CD8-positive, alpha-beta T cell (primary cell): ENCODE measurements at regions of chr7 and their contacts with region 1.

Region 1: GRCh38 chr7:104923010-104923421 is 91.0 kb upstream of the KMT2E start:
- DNase-seq: peak; percentile 54 to 88 (median 72)
- ATAC-seq: peak; percentile 96
- H3K4me3 ChIP-seq: no peak overlapping the region
- H3K4me3 Mint-ChIP-seq: no peak overlapping the region
- H3K27ac ChIP-seq: no peak overlapping the region
- H3K27ac Mint-ChIP-seq: peak overlapping the region; percentile 55
- H3K4me1 ChIP-seq: no peaks in the 10 kb centered on the region
- H3K4me1 Mint-ChIP-seq: peaks cover 5% of the 10 kb centered on the region
- H3K27me3 ChIP-seq: no peaks in the 10 kb centered on the region
- H3K27me3 Mint-ChIP-seq: no peaks in the 10 kb centered on the region
- CTCF ChIP-seq: peak; percentile 66

Region 2: DNA sequence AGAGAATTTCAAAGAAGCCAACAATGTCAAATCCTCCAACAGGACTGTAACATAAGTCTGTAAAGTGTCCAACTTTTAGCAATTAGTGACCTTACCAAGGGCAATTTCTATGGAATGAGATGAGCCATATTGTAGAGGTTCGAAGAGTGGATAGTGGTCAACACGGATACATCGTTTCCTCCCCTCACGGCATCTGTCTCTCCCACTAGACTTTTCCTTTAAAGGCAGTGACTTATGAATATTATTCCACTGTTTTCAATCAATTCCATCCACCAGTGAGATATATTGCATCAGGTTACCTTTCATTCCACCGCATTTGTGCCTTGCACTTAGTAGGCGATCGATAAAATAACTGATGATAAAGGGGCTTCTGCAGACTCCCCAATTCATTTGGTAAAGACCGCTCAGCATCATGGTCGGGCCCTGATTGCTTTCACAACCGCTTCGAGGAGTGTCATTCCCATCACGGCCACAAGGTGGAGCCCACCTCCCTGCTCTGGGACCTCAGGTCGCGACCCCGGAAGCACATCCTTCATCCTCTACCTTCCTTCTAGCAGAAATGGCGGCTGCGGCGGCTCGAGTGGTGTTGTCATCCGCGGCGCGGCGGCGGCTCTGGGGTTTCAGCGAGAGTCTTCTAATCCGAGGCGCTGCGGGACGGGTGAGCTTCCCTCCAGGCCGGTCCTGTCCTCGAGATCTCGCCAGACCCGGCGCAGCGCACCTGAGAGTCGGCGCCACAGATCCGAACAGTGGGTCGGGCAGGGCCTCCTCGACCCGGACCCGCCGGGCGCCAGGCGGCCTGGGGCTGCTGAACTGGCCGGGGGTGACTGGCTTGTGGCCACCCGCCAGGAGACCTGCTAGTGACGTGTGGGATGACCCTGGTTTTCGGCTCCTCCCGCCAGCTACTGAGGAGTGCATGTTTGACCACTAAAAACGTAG is 1625.8 kb before region 1 on chr7 and contains the start of gene PMPCB:
- CTCF ChIA-PET with region 1: no interaction called
- POLR2A ChIA-PET with region 1: no interaction called
- intact Hi-C with region 1: loop called (anchors 2 to 5 kb)
- DNase-seq: peak; percentile 92 to 98 (median 97)
- ATAC-seq: peak; percentile 100
- H3K4me3 ChIP-seq: peak within 1 kb of the TSS; percentile 72 to 75
- H3K4me3 Mint-ChIP-seq: peak within 1 kb of the TSS; percentile 83
- H3K27ac ChIP-seq: peak within 1 kb of the TSS; percentile 76 to 92
- H3K27ac Mint-ChIP-seq: peak within 1 kb of the TSS; percentile 85
- H3K4me1 ChIP-seq: peaks cover 19% of the 10 kb centered on the region
- H3K4me1 Mint-ChIP-seq: peaks cover 43% of the 10 kb centered on the region
- H3K27me3 ChIP-seq: no peaks in the 10 kb centered on the region
- H3K27me3 Mint-ChIP-seq: no peaks in the 10 kb centered on the region
- CTCF ChIP-seq: peak; percentile 82
- total RNA-seq, gene PMPCB: 104 to 108 TPM

Region 3: DNA sequence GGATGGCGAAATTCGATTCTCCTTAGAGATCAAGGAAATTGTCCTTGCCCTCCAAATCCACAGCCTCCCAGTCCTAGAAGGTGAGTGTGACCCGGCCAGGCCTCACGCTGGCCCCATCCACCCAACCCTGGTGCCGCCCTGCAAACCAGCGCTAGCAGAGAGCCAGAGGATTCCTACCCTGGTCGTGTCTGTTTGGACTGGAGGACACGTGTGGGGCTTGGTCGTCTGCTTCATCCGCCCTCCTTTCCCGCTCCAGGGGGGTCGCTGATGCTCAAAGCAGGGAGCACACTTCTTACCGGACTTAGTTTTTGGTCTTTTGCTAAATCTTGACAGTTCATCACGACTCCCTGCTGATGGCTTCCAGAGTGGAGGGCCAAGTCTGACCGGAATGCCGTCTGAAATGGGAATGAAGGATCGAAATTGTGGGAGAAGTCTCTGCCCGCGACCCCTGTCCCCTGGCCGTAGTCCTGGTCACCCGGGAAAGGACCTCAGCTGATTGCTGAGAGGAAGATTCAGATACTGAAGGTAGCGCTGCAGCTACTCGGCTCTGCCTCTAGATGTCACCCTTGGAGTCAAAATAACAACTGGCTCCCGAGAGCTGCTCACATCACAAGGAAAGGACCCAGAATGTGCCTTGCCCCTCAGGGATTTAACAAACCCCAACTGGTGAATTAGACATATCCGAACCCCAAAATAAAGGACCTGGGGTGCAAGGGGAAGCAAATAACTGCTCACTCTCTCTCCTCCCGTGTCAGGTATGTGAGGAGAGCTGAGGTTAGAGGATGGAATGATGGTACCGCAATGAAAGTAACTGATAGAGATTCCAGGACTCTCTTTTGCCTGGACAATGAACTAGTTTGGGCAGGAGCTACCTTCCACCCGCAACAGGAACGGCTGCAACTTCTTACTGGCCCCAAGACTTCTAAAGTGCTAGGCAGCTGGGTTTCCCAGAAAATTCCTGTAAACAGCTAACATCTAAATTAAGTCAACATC is 691.7 kb before region 1 on chr7:
- CTCF ChIA-PET with region 1: interaction called, 4 read pairs
- POLR2A ChIA-PET with region 1: no interaction called
- intact Hi-C with region 1: loop called in 1 of 2 experiments (anchors 1 kb)
- DNase-seq: peak in 8 of 9 experiments; percentile 9 to 60 (median 39)
- ATAC-seq: peak; percentile 80
- H3K4me3 ChIP-seq: no peak overlapping the region
- H3K4me3 Mint-ChIP-seq: no peak overlapping the region
- H3K27ac ChIP-seq: no peak overlapping the region
- H3K27ac Mint-ChIP-seq: no peak overlapping the region
- H3K4me1 ChIP-seq: no peaks in the 10 kb centered on the region
- H3K4me1 Mint-ChIP-seq: no peaks in the 10 kb centered on the region
- H3K27me3 ChIP-seq: peaks cover 0 to 2% of the 10 kb centered on the region in 2 experiments
- H3K27me3 Mint-ChIP-seq: peaks cover 32% of the 10 kb centered on the region
- CTCF ChIP-seq: peak; percentile 78

Region 4: GRCh38 chr7:104862719-104863118 is 60.3 kb before region 1 on chr7:
- CTCF ChIA-PET with region 1: no interaction called
- POLR2A ChIA-PET with region 1: no interaction called
- intact Hi-C with region 1: no loop called
- DNase-seq: no peak
- ATAC-seq: no peak
- H3K4me3 ChIP-seq: no peak overlapping the region
- H3K4me3 Mint-ChIP-seq: no peak overlapping the region
- H3K27ac ChIP-seq: no peak overlapping the region
- H3K27ac Mint-ChIP-seq: no peak overlapping the region
- H3K4me1 ChIP-seq: peaks cover 9% of the 10 kb centered on the region
- H3K4me1 Mint-ChIP-seq: peaks cover 10% of the 10 kb centered on the region
- H3K27me3 ChIP-seq: no peaks in the 10 kb centered on the region
- H3K27me3 Mint-ChIP-seq: peaks cover 17% of the 10 kb centered on the region
- CTCF ChIP-seq: no peak

Region 5: GRCh38 chr7:104883718-104884452 is 39.1 kb before region 1 on chr7:
- CTCF ChIA-PET with region 1: interaction called, 166 read pairs
- POLR2A ChIA-PET with region 1: interaction called, 3 read pairs
- intact Hi-C with region 1: loop called (anchors 1 kb)
- DNase-seq: peak; percentile 46 to 84 (median 77)
- ATAC-seq: peak; percentile 84
- H3K4me3 ChIP-seq: no peak overlapping the region
- H3K4me3 Mint-ChIP-seq: no peak overlapping the region
- H3K27ac ChIP-seq: no peak overlapping the region
- H3K27ac Mint-ChIP-seq: no peak overlapping the region
- H3K4me1 ChIP-seq: no peaks in the 10 kb centered on the region
- H3K4me1 Mint-ChIP-seq: peaks cover 5% of the 10 kb centered on the region
- H3K27me3 ChIP-seq: no peaks in the 10 kb centered on the region
- H3K27me3 Mint-ChIP-seq: no peaks in the 10 kb centered on the region
- CTCF ChIP-seq: peak; percentile 88

Region 6: GRCh38 chr7:105046414-105046813 is 123.4 kb after region 1 on chr7:
- CTCF ChIA-PET with region 1: no interaction called
- POLR2A ChIA-PET with region 1: no interaction called
- intact Hi-C with region 1: loop called (anchors 1 to 2 kb)
- DNase-seq: no peak
- ATAC-seq: no peak
- H3K4me3 ChIP-seq: no peak overlapping the region
- H3K4me3 Mint-ChIP-seq: no peak overlapping the region
- H3K27ac ChIP-seq: no peak overlapping the region
- H3K27ac Mint-ChIP-seq: no peak overlapping the region
- H3K4me1 ChIP-seq: peaks cover 5% of the 10 kb centered on the region
- H3K4me1 Mint-ChIP-seq: peaks cover 67% of the 10 kb centered on the region
- H3K27me3 ChIP-seq: no peaks in the 10 kb centered on the region
- H3K27me3 Mint-ChIP-seq: no peaks in the 10 kb centered on the region
- CTCF ChIP-seq: no peak

Region 7: DNA sequence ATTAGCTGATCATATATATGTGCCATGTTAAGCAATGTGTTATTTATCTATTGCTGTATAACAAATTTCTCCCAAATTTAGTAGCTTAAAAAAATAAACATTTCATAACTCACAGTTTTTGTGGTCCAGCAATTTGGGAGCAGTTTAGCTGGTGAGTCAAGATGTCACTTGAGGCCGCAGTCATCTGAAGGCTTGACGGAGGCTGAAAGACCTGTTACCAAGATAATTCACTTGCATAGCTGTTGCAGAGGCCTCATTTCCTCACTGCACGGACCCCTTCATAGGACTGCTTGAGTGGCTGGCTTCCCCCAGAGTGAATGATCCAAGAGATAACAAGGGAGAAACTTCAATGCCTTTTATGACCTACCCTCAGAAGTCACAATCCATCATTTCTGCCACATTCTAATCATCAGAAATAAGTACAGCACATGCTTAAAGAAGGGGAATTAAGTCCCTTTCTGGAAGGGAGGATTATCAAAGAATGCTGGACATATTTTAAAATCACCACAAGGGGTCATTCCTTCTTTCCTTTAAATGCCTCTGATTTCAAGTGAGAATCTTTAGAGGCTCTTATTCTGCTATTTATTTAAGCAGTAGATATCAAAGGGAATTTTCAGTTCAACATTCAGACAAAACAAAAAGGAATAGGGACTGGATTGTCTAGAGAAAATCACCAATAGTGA is 476.2 kb after region 1 on chr7:
- CTCF ChIA-PET with region 1: no interaction called
- POLR2A ChIA-PET with region 1: no interaction called
- intact Hi-C with region 1: no loop called
- DNase-seq: no peak
- ATAC-seq: no peak
- H3K4me3 ChIP-seq: no peak overlapping the region
- H3K4me3 Mint-ChIP-seq: no peak overlapping the region
- H3K27ac ChIP-seq: no peak overlapping the region
- H3K27ac Mint-ChIP-seq: no peak overlapping the region
- H3K4me1 ChIP-seq: no peaks in the 10 kb centered on the region
- H3K4me1 Mint-ChIP-seq: peaks cover 4% of the 10 kb centered on the region
- H3K27me3 ChIP-seq: no peaks in the 10 kb centered on the region
- H3K27me3 Mint-ChIP-seq: no peaks in the 10 kb centered on the region
- CTCF ChIP-seq: no peak

Region 8: DNA sequence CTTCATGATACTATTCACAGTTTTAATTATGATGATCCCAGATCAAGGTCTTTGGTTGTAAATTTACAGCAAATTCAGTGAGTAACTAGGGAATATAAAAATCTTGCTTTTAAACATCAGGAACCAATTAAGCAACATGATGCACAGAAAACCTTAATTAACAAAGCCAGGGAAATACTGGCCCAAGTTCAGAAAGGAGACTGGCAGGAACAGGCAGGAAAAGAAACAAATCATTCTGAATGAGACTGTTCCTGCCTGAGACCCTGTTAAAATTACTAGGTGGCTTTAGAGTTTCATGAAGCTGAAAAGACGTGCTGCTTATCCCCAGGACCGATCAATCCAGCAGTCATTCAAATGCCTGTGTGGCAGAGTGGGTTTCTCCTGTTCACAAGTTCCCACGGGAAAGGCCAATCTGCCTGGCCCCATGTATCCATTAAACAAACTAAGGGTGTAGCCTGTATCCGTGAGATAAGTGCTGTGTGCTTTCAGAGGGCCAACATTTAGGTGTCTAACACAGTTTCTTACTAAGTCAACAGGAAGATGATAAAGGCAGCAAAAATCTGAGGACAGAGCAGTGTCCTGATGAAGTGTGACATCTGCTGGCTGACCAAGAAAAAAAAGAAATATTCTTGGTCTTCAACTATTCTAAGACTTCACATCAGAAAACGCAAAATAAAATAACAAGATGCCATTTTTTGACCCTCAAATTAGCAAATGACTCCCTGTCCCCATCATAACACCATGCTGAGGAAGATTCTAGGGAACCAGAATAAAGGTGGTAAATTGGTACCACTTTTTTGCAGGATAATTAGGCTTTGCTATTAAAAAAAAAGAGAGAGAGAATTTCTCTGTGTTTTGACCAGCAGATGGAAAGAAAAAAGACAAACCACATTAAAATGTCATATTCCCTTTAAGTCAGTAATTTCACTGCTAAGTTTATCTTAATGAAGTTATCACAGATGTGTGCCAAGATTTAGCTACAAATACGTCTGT is 564.9 kb after region 1 on chr7:
- CTCF ChIA-PET with region 1: no interaction called
- POLR2A ChIA-PET with region 1: no interaction called
- intact Hi-C with region 1: loop called in 1 of 2 experiments (anchors 5 kb)
- DNase-seq: peak in 3 of 9 experiments; percentile 39 to 53 (median 50)
- ATAC-seq: no peak
- H3K4me3 ChIP-seq: no peak overlapping the region
- H3K4me3 Mint-ChIP-seq: no peak overlapping the region
- H3K27ac ChIP-seq: no peak overlapping the region
- H3K27ac Mint-ChIP-seq: no peak overlapping the region
- H3K4me1 ChIP-seq: no peaks in the 10 kb centered on the region
- H3K4me1 Mint-ChIP-seq: peaks cover 4% of the 10 kb centered on the region
- H3K27me3 ChIP-seq: no peaks in the 10 kb centered on the region
- H3K27me3 Mint-ChIP-seq: no peaks in the 10 kb centered on the region
- CTCF ChIP-seq: peak; percentile 22